Heart left ventricle (tissue), 16 donors: ENCODE measurements at regions of chr5 and their contacts with region 1.

Region 1: DNA sequence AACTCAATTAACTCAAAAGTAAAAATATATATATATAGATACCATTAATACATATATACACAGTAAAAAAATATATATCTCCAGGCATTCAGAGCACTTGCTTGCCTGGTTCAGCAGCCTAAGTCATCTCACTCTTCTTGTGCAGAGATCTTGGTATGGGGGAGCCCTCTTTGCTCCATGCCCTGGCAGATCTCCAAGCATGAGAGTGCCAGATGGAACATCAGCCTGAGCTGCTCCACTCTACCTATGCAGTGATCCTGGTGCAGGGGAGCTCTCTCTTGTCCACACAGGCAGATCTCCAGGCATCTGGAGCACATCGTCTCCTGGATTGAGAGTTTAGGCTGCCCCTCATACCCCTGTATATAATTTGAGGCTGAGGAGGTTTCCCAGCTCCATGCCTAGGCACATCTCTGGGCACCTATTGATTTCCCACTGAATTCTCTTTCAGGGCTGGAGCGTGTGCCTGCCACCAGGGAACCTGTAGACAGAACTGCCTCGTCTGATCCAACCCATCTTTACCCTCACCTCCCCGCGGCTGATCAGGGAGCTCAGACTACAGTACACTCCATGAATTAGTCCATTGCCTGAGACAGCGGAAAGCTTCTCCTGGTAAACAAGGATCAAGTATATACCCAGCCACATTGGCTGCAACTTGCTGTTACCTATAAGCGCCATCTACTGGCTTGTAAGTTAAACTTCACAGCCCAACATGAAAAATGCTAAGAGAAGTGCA is 342.4 kb upstream of the GRIA1 start:
- DNase-seq: peak in 4 of 5 donors; percentile 8 to 51 (median 24)
- ATAC-seq: peak in 3 of 4 donors; percentile 65 to 77 (median 76)
- H3K4me3 ChIP-seq: no peak overlapping the region
- H3K27ac ChIP-seq: no peak overlapping the region
- H3K4me1 ChIP-seq: no peaks in the 10 kb centered on the region
- H3K27me3 ChIP-seq: peaks cover 0 to 5% (median 0%) of the 10 kb centered on the region in 9 donors
- CTCF ChIP-seq: peak; percentile 40 to 73 (median 58)
- POLR2A ChIP-seq: no peak

Region 2: DNA sequence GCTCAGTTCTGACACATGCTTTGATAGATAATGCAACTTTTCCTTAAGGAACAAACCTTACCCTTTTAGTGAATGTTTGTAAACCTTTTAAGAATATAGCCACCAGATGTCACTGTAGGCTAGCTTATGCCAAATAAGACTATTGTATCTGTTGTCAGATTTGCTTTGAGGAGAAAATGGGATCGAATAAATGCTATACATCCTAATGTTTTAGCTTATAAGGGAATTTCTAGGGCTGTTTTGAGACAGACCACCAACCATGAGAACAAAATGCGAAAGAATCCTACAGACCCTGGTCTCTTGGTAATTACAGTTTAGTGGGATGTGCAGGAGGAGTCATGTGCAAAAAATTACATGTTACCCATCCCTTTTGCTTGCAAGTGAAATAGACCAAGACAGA is 615.3 kb before region 1 on chr5:
- intact Hi-C with region 1: loop called in 2 of 10 experiments (anchors 1 to 2 kb)
- DNase-seq: no peak
- ATAC-seq: no peak
- H3K4me3 ChIP-seq: no peak overlapping the region
- H3K27ac ChIP-seq: no peak overlapping the region
- H3K4me1 ChIP-seq: peaks cover 0 to 6% (median 0%) of the 10 kb centered on the region in 12 donors
- H3K27me3 ChIP-seq: no peaks in the 10 kb centered on the region
- CTCF ChIP-seq: peak; percentile 16 to 69 (median 56)
- POLR2A ChIP-seq: no peak

Region 3: GRCh38 chr5:152560512-152561137 is 587.4 kb before region 1 on chr5:
- intact Hi-C with region 1: loop called (anchors 1 to 5 kb)
- DNase-seq: peak; percentile 50 to 71 (median 64)
- ATAC-seq: peak in 3 of 4 donors; percentile 62 to 72 (median 64)
- H3K4me3 ChIP-seq: no peak overlapping the region
- H3K27ac ChIP-seq: no peak overlapping the region
- H3K4me1 ChIP-seq: no peaks in the 10 kb centered on the region
- H3K27me3 ChIP-seq: no peaks in the 10 kb centered on the region
- CTCF ChIP-seq: peak; percentile 65 to 92 (median 82)
- POLR2A ChIP-seq: no peak

Region 4: GRCh38 chr5:153964880-153965645 is 817.0 kb after region 1 on chr5:
- intact Hi-C with region 1: loop called in 2 of 10 experiments (anchors 10 kb)
- DNase-seq: peak in 2 of 5 donors; percentile 35 to 39
- ATAC-seq: peak; percentile 60 to 82 (median 76)
- H3K4me3 ChIP-seq: peak overlapping the region in 2 of 12 donors; percentile 34 to 37
- H3K27ac ChIP-seq: no peak overlapping the region
- H3K4me1 ChIP-seq: peaks cover 0 to 9% (median 0%) of the 10 kb centered on the region in 12 donors
- H3K27me3 ChIP-seq: no peaks in the 10 kb centered on the region
- CTCF ChIP-seq: peak; percentile 70 to 93 (median 87)
- POLR2A ChIP-seq: no peak